ENCODE measurements at regions of chr1 and their contacts with region 1.

Region 1: DNA sequence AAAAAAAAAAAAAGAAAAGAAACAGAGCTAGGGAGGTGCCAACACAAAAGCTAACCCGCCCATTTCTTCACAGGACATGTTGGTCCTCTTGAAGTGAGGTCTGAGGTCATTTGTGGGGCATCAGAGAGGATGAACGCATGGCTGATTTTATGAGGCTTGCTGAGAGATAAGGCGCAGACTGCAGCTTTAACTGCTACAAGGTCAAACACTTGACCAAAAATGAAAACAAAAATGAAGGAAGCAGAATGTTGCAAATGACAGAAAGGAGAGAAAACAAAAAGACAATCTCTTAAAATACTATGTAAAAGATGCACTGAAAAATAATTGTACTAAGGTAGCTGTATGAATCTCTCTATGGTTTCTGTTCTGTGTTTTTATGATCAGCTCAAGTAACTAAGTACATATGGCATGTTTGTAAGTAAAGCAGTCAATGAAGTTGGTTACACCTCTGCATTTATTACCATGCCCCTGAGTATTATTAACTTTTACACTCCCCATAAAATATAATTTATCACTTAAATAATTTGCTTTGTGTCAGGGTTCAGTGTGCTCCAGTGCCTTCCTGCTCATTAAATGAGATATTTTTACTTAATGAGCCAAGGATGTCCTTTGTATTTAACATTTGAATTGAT is 249.1 kb upstream of the NR5A2 start:
- DNase-seq: no peak
- ATAC-seq: no peak
- H3K4me3 ChIP-seq: no peak overlapping the region
- H3K4me3 Mint-ChIP-seq: no peak overlapping the region
- H3K27ac ChIP-seq: no peak overlapping the region
- H3K27ac Mint-ChIP-seq: no peak overlapping the region
- H3K4me1 ChIP-seq: no peaks in the 10 kb centered on the region
- H3K4me1 Mint-ChIP-seq: no peaks in the 10 kb centered on the region
- H3K27me3 ChIP-seq: no peaks in the 10 kb centered on the region
- H3K27me3 Mint-ChIP-seq: peaks cover 9 to 17% of the 10 kb centered on the region in 2 donors

Region 2: GRCh38 chr1:199720496-199720895 is 57.9 kb before region 1 on chr1:
- CTCF ChIA-PET with region 1: no interaction called
- POLR2A ChIA-PET with region 1: interaction called in 1 of 2 experiments, 13 read pairs
- DNase-seq: no peak
- ATAC-seq: no peak
- H3K4me3 ChIP-seq: no peak overlapping the region
- H3K4me3 Mint-ChIP-seq: no peak overlapping the region
- H3K27ac ChIP-seq: no peak overlapping the region
- H3K27ac Mint-ChIP-seq: no peak overlapping the region
- H3K4me1 ChIP-seq: peaks cover 0 to 2% of the 10 kb centered on the region in 2 experiments
- H3K4me1 Mint-ChIP-seq: no peaks in the 10 kb centered on the region
- H3K27me3 ChIP-seq: peaks cover 0 to 3% of the 10 kb centered on the region in 2 experiments
- H3K27me3 Mint-ChIP-seq: peaks cover 0 to 8% of the 10 kb centered on the region in 2 donors

Measured in T-cell (primary cell).